ENCODE measurements at regions of chr12 and their contacts with region 1.

Region 1: GRCh38 chr12:49098035-49098451 is 3.4 kb upstream of the DHH start:
- DNase-seq: peak; percentile 61
- H3K4me3 Mint-ChIP-seq: no peak overlapping the region
- H3K27ac Mint-ChIP-seq: no peak overlapping the region
- H3K4me1 Mint-ChIP-seq: peaks cover 5% of the 10 kb centered on the region
- H3K27me3 Mint-ChIP-seq: no peaks in the 10 kb centered on the region
- CTCF ChIP-seq: peak; percentile 51

Region 2: GRCh38 chr12:49110464-49111155 is 12.6 kb after region 1 on chr12 and contains the start of gene LMBR1L:
- CTCF ChIA-PET with region 1: interaction called, 27 read pairs
- POLR2A ChIA-PET with region 1: interaction called, 25 read pairs
- intact Hi-C with region 1: no loop called
- DNase-seq: peak; percentile 99
- H3K4me3 Mint-ChIP-seq: peak within 1 kb of the TSS; percentile 86
- H3K27ac Mint-ChIP-seq: peak within 1 kb of the TSS; percentile 97
- H3K4me1 Mint-ChIP-seq: peaks cover 18% of the 10 kb centered on the region
- H3K27me3 Mint-ChIP-seq: no peaks in the 10 kb centered on the region
- CTCF ChIP-seq: peak; percentile 14
- total RNA-seq, gene LMBR1L: 27.8 and 35.7 TPM in 2 replicates